Dorsolateral prefrontal cortex (tissue), 120 donors: ENCODE measurements at regions of chr1 and their contacts with region 1.

Region 1: DNA sequence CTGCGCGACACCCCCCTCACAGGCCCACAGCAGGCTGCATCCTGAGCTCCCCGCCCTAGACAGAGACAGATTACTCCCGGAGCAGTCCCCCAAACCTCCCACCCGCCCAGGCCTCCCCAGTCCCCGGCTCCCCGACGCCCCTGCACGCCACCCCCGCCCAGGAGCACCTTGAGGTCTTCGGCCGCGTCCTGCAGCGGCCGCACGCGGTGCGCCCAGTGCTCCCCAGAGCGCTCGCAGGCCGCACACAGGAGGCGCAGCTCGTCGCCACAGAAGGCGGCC is 709 bp downstream of the TRIM11 start:
- DNase-seq: peak in 1 of 10 donors; percentile 31
- H3K4me3 ChIP-seq: peak overlapping the region; percentile 75 to 99 (median 93)
- H3K27ac ChIP-seq: peak overlapping the region in 48 of 59 donors; percentile 51 to 92 (median 83)
- H3K27me3 ChIP-seq: no peaks in the 10 kb centered on the region
- CTCF ChIP-seq: no peak

Region 2: DNA sequence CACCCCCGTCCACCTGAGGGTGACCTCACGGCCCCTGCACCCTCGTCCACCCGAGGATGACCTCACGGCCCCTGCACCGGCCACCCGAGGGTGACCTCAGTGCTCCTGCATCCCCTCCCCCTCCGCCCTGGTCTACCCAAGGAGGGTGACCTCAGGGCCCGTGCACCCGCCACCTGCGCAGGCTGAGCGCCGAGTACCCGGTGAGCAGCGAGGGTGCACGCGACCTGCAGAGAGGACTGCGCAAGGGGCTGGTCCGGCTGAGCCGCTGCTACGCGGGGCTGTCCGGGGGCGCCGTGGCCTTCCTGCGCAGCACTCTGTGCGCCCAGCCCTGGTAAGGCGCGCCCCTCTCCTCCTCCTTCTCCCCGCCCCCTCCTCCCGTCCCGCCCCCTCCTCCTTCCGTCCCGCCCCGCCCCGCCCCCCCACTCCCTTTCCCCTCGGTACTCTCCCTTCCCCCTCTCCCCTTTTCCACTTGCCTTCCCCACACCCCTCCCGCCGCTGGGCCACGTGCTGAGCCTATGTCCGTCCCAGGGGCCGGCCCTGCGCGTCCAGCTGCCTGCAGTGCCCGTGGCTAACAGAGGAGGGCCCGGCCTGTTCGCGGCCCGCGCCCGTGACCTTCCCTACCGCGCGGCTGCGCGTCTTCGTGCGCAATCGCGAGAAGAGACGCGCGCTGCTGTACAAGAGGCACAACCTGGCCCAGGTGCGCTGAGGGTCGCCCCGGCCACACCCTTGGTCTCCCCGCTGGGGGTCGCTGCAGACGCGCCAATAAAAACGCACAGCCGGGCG is 27.6 kb before region 1 on chr1:
- intact Hi-C with region 1: no loop called
- DNase-seq: peak in 9 of 10 donors; percentile 36 to 71 (median 56)
- H3K4me3 ChIP-seq: peak overlapping the region; percentile 41 to 76 (median 64)
- H3K27ac ChIP-seq: peak overlapping the region in 51 of 59 donors; percentile 2 to 91 (median 69)
- H3K27me3 ChIP-seq: no peaks in the 10 kb centered on the region
- CTCF ChIP-seq: peak in 54 of 56 donors; percentile 22 to 68 (median 53)

Region 3: DNA sequence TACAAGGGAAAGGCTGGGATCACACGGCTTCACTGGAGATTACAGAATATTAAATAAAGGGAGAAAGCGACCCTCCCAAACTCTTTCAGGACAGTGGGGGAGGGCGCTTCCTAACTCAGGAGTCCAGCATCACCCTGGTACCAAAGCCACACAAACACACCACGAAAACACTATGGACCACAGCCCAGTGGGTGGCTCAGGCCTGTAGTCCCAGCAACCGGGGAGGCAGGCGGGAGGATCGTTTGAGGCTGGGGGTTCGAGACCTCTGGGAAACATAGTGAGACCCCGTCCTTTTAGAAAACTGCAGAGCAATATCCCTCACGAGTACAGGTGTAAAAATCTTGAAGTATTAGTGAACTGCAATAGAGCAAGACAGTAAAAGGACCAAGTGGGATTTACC is 15.3 kb before region 1 on chr1:
- intact Hi-C with region 1: no loop called
- DNase-seq: peak in 3 of 10 donors; percentile 10 to 15 (median 12)
- H3K4me3 ChIP-seq: no peak overlapping the region
- H3K27ac ChIP-seq: no peak overlapping the region
- H3K27me3 ChIP-seq: no peaks in the 10 kb centered on the region
- CTCF ChIP-seq: no peak

Region 4: GRCh38 chr1:228452194-228453021 is 46.5 kb after region 1 on chr1:
- intact Hi-C with region 1: loop called (anchors 2 to 5 kb)
- DNase-seq: no peak
- H3K4me3 ChIP-seq: no peak overlapping the region
- H3K27ac ChIP-seq: peak overlapping the region in 1 of 59 donors; percentile 21
- H3K27me3 ChIP-seq: peaks cover 0 to 10% (median 0%) of the 10 kb centered on the region in 45 donors
- CTCF ChIP-seq: no peak

Region 5: DNA sequence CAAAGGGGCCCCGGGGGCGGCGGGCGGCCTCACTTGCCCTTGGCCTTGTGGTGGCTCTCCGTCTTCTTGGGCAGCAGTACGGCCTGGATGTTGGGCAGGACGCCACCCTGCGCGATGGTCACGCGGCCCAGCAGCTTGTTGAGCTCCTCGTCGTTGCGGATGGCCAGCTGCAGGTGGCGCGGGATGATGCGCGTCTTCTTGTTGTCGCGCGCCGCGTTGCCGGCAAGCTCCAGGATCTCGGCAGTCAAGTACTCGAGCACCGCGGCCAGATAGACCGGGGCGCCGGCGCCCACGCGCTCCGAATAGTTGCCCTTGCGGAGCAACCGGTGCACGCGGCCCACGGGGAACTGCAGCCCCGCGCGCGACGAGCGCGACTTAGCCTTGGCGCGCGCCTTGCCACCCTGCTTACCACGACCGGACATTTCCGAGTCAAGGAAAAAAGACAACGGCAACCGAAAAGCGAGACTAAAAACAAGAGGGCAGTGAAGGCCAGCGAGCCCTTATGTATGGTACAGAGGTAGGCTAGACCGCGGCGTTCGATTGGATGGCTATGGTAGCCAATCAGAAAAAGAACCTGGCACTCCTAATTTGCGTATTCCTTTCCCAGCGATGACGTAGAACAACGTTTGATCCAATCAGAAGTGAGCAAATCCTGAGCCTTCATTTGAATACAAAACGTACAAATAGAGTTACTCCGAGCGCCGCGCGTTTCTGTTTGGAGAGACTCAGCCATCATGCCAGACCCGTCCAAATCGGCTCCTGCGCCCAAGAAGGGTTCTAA is 51.7 kb after region 1 on chr1:
- intact Hi-C with region 1: loop called (anchors 2 to 5 kb)
- DNase-seq: peak; percentile 72 to 98 (median 92)
- H3K4me3 ChIP-seq: peak overlapping the region; percentile 49 to 84 (median 71)
- H3K27ac ChIP-seq: peak overlapping the region; percentile 71 to 97 (median 90)
- H3K27me3 ChIP-seq: peaks cover 0 to 43% (median 7%) of the 10 kb centered on the region in 45 donors
- CTCF ChIP-seq: peak in 33 of 56 donors; percentile 6 to 48 (median 32)

Region 6: DNA sequence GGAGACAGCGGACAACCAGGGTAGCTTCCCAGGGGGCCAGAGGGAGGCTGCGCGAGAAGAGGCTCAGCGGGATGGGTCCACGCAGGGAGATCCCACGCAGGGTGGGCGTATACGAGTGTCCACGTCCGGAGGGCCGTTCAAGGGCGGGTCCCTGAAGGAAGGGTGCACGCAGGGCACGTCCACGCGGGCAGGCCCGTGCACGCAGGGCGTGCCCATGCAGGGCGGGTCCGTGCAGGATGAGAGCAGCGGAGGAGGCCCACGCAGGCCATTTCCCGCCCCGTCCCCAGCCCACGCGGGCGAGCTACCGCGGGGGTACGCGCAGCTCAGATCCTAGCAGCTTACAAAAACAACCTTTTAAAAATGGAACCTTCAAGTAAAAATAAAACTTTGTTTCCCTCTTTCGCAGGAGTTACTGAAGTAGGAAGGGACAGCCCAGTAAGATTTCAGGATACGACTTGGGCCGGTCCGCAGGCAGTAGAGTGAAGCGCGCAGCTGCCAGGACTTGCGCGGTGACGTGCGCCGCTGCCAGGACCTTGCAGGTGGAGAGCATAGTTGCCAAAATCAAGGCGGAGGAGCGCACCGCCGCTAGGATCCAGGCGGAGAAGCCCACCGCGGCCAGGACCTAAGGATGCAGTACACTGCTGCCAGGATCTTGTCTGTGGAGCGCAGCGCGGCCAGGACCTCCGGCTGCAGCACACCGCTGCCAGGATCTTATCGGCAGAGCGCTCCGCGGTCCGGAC is 80.8 kb after region 1 on chr1:
- intact Hi-C with region 1: loop called in 1 of 2 experiments (anchors 5 kb)
- DNase-seq: peak; percentile 56 to 87 (median 78)
- H3K4me3 ChIP-seq: peak overlapping the region; percentile 66 to 99 (median 89)
- H3K27ac ChIP-seq: peak overlapping the region; percentile 97 to 100 (median 100)
- H3K27me3 ChIP-seq: no peaks in the 10 kb centered on the region
- CTCF ChIP-seq: peak in 6 of 56 donors; percentile 6 to 31 (median 16)